Gastrocnemius medialis (tissue), 4 donors: ENCODE measurements at regions of chr20 and their contacts with region 1.

Region 1: DNA sequence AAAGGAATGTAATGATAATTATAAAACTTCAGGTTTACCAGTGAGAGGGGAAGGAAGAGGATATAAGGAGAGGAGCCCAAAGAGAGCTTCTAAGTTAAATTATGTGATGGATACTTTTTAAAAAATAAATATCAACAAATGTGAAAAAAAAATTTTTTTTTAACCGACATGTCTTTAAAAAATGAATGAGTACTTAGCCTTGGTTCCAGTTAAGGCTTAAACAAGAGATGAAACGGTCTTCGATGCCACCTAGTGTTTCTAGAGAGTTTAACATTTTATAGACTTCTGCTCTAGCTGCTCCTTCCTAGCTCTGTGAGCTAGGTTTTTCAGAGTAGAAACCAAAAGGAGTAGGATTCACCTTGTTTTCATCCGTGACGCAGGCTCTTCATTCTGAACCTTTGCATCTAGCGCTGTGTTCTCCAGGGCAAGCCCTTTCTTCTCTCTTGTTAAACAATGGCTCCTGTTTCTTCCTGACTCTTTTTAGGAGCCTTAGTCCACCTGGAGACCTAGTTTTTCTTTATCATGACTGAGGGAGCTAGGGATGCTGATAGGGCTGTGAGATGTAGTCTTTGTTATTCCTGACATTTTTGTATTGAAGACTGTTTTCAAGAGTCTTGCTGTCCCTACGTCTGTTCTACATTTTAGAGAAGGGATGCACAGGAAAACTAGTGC is 42.4 kb upstream of the GNRH2 start:
- DNase-seq: no peak
- ATAC-seq: peak in 1 of 2 donors; percentile 55
- H3K4me3 ChIP-seq: no peak overlapping the region
- H3K27ac ChIP-seq: no peak overlapping the region
- H3K4me1 ChIP-seq: no peaks in the 10 kb centered on the region
- H3K27me3 ChIP-seq: no peaks in the 10 kb centered on the region
- CTCF ChIP-seq: peak in 4 of 5 experiments; percentile 30 to 48 (median 40)
- POLR2A ChIP-seq: no peak

Region 2: GRCh38 chr20:2643708-2644107 is 357.3 kb before region 1 on chr20:
- in situ Hi-C with region 1: no loop called
- intact Hi-C with region 1: loop called (anchors 10 kb)
- DNase-seq: no peak
- ATAC-seq: no peak
- H3K4me3 ChIP-seq: no peak overlapping the region
- H3K27ac ChIP-seq: no peak overlapping the region
- H3K4me1 ChIP-seq: no peaks in the 10 kb centered on the region
- H3K27me3 ChIP-seq: no peaks in the 10 kb centered on the region
- CTCF ChIP-seq: no peak
- POLR2A ChIP-seq: no peak

Region 3: DNA sequence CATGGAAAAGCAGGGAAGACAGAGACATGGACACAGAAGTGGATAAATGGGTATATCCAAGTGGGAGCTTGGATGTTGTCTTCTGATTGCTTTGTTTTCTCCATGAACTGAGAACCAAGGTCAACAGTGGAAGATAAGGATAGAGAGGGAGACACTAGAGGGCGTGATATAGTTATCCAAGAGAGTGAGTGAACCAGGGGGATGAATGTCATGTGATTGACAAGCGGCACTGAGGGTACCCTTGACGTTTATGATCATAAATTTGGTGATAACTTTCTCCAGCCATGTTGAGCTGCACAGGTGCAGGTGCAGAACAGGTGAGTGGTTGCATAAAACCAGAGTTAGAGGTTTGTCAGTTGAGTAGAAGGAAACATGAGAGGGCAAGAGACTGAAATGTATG is 287.7 kb before region 1 on chr20:
- in situ Hi-C with region 1: loop called in 1 of 4 experiments (anchors 25 kb)
- intact Hi-C with region 1: no loop called
- DNase-seq: no peak
- ATAC-seq: no peak
- H3K4me3 ChIP-seq: no peak overlapping the region
- H3K27ac ChIP-seq: no peak overlapping the region
- H3K4me1 ChIP-seq: no peaks in the 10 kb centered on the region
- H3K27me3 ChIP-seq: peaks cover 0 to 3% (median 0%) of the 10 kb centered on the region in 3 donors
- CTCF ChIP-seq: no peak
- POLR2A ChIP-seq: no peak

Region 4: DNA sequence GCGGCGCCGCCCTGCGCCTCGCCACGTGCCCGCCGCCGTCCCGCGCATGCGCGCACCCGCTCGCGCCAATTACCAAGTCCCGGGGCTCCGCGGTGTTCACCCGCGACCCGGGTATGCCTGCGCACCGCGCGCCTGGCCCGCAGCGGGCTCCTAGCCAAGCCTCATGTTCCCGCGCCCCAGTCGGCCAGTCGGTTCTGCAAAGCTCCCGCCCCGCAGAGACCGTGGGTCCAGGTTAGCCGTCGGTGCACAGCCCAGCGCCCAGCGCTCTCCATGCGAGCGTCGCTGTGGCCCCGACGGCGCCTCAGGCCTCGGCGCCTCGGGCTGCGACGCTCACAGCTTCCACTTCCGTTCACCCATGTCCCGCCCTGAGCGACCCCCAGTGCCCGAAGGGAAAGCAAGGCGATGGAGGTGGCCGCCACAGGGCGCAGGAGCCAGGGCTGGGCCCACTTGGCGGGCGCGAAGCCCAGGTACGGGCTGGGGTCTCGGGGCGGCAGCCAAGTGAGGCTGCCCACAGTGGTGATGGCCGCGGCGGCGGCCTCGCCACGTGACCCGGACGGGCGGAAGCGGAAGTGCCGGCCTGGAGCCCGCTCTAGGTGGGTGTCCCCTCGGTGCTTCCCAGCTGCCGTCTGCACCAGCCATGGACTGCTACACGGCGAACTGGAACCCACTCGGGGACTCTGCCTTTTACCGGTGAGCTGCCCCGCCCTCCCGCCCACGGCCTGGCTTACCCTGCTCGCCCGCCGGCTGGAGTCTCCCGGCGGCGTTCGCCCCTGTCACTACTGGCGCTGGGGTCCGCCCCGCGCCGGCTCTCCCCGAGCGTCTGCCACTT is 160.6 kb before region 1 on chr20 and contains the starts of genes PCED1A and VPS16:
- in situ Hi-C with region 1: no loop called
- intact Hi-C with region 1: loop called (anchors 2 kb)
- DNase-seq: peak; percentile 71 to 82
- ATAC-seq: peak; percentile 95 to 97
- H3K4me3 ChIP-seq: peak within 1 kb of the TSS; percentile 88 to 98 (median 90)
- H3K27ac ChIP-seq: peak within 1 kb of the TSS; percentile 83 to 97 (median 94)
- H3K4me1 ChIP-seq: peaks cover 16 to 23% of the 10 kb centered on the region in 2 donors
- H3K27me3 ChIP-seq: no peaks in the 10 kb centered on the region
- CTCF ChIP-seq: no peak
- POLR2A ChIP-seq: peak; percentile 42 to 60
- total RNA-seq, gene PCED1A: 2.6 to 9.3 (median 5.7) TPM
- total RNA-seq, gene VPS16: 17.3 to 26.4 (median 21.6) TPM